Activated T-helper 1 cell treated with anti-CD3 and anti-CD28 coated beads, Interleukin-12 subunit alpha, Interleukin-12 subunit beta, Interleukin-2, Interleukin-4 antibody, amounts not matched to agents 30 ng/mL and 10 ng/mL and 1 ng/mL, durations not matched to agents 14 hours and 24 hours and 36 hours (primary cell): ENCODE measurements at regions of chr11 and their contacts with region 1.

Region 1: GRCh38 chr11:123407130-123407995 is 22.7 kb upstream of the GRAMD1B start:
- DNase-seq: peak; percentile 20
- H3K4me3 Mint-ChIP-seq: peak overlapping the region; percentile 77
- H3K27ac Mint-ChIP-seq: peak overlapping the region; percentile 90
- H3K4me1 Mint-ChIP-seq: peaks cover 70% of the 10 kb centered on the region
- H3K27me3 Mint-ChIP-seq: no peaks in the 10 kb centered on the region

Region 2: GRCh38 chr11:123391646-123392348 is 15.6 kb before region 1 on chr11:
- intact Hi-C with region 1: loop called (anchors 1 kb)
- DNase-seq: no peak
- H3K4me3 Mint-ChIP-seq: peak overlapping the region; percentile 52
- H3K27ac Mint-ChIP-seq: peak overlapping the region; percentile 72
- H3K4me1 Mint-ChIP-seq: peaks cover 66% of the 10 kb centered on the region
- H3K27me3 Mint-ChIP-seq: no peaks in the 10 kb centered on the region

Region 3: DNA sequence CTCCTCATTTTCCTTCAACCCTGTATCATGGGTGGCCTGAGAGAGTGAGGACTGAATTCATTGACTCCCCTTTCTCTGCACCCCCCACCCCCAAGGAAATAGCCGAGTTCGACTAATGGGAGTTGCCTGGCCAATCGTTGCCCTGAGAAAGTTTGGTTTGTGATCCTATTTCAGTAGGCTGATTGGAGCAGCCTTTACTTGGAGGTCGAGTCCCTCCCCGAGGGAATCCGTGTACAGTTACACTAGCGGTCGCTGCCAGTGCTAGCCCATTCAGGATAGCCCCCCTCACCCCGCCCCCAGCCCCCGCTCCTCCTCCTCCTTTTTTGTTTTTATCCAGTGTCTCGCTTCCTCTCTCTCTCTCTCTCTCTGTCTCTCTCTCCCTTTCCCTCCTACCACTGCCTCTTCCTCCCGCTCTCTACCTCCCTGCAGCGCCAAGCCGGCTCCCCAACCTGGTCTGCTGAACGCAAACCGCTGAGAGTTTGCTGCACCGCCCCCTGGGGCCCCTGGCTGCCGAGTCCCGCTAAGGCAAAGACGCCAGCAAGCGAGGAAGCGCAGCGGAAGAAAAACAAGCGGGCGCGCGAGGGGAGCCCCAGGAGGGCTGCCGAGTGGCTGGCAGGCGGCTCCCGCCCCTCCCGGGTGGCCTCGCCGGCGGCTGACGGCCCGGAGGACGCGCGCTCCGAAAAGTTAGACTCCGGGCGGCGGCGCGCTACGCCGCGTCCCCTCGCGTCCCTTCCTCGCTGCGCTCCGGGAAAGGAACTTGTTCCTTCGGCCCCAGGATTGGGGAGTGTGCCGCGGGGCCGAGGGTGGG is 22.8 kb after region 1 on chr11 and contains the start of gene GRAMD1B:
- intact Hi-C with region 1: loop called (anchors 1 kb)
- DNase-seq: peak; percentile 78
- H3K4me3 Mint-ChIP-seq: peak within 1 kb of the TSS; percentile 91
- H3K27ac Mint-ChIP-seq: peak within 1 kb of the TSS; percentile 93
- H3K4me1 Mint-ChIP-seq: peaks cover 76% of the 10 kb centered on the region
- H3K27me3 Mint-ChIP-seq: no peaks in the 10 kb centered on the region
- total RNA-seq, gene GRAMD1B: 154 and 155 TPM in 2 replicates

Region 4: DNA sequence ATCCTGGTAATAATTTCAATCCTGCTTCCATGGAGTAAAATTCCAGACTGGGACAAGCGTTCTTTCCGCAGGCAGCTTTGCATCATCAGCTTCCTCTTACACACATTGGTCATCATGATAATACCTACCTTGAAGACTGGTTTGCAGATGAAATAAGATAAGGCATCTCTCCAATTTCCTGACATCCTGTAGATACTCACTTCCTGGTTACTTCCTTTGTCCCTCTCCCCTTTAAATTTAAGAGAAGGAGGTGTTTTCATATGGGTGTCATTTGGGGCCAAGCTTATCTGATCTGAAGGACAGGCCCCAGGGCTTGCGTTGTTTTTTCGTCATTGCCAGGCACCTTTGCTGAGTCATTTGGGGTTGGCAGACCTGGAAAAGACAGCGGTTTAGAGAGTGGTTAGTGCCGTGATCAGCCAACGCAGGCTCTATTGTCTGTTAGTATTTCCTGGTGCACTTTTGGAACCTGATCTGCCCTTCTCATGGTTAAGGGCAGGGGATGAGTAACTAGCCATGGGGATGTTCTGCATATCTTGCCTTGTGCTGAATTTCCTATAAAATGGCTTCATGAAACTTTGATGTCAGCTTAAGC is 46.8 kb after region 1 on chr11:
- intact Hi-C with region 1: loop called (anchors 2 kb)
- DNase-seq: peak; percentile 74
- H3K4me3 Mint-ChIP-seq: peak overlapping the region; percentile 82
- H3K27ac Mint-ChIP-seq: peak overlapping the region; percentile 97
- H3K4me1 Mint-ChIP-seq: peaks cover 98% of the 10 kb centered on the region
- H3K27me3 Mint-ChIP-seq: no peaks in the 10 kb centered on the region

Region 5: DNA sequence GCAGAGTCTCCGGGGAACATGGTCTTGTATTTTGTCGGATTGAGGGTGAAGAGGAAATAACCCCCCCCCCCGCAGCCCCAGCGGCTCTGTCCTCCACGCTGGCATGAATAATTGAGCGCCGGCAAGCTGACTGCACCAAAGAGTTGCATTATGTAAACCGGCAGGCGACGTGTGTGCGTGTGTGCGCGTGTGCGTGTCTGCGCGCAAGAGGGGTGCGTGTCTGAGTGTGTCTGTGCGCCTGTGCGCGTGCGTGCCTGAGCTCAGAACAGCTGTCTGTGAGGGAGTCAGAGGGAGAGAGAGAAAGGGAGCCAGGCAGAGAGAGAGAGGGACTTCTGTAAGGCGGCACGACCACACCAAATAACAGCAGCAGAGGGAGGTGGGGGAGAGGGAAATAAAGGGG is 152.6 kb after region 1 on chr11:
- intact Hi-C with region 1: loop called (anchors 1 kb)
- DNase-seq: peak; percentile 24
- H3K4me3 Mint-ChIP-seq: peak overlapping the region; percentile 65
- H3K27ac Mint-ChIP-seq: peak overlapping the region; percentile 57
- H3K4me1 Mint-ChIP-seq: peaks cover 28% of the 10 kb centered on the region
- H3K27me3 Mint-ChIP-seq: no peaks in the 10 kb centered on the region